ENCODE measurements at regions of chr6 and their contacts with region 1.

Region 1: GRCh38 chr6:36623547-36624459 is 29.6 kb downstream of the SRSF3 start:
- DNase-seq: peak; percentile 88
- ATAC-seq: peak; percentile 72
- H3K4me3 ChIP-seq: no peak overlapping the region
- H3K27ac ChIP-seq: no peak overlapping the region
- H3K4me1 ChIP-seq: peaks cover 23% of the 10 kb centered on the region
- H3K27me3 ChIP-seq: no peaks in the 10 kb centered on the region
- CTCF ChIP-seq: peak; percentile 92

Region 2: GRCh38 chr6:36678518-36679027 is 54.8 kb after region 1 on chr6 and contains the start of gene CDKN1A:
- CTCF ChIA-PET with region 1: interaction called, 3 read pairs
- POLR2A ChIA-PET with region 1: interaction called, 3 read pairs
- intact Hi-C with region 1: loop called (anchors 1 kb)
- DNase-seq: peak; percentile 92
- ATAC-seq: peak; percentile 74
- H3K4me3 ChIP-seq: peak within 1 kb of the TSS; percentile 76
- H3K27ac ChIP-seq: peak within 1 kb of the TSS; percentile 49
- H3K4me1 ChIP-seq: peaks cover 34% of the 10 kb centered on the region
- H3K27me3 ChIP-seq: no peaks in the 10 kb centered on the region
- CTCF ChIP-seq: no peak
- total RNA-seq, gene CDKN1A: 79.5 and 91.5 TPM in 2 replicates

Region 3: GRCh38 chr6:36809941-36810803 is 186.4 kb after region 1 on chr6:
- CTCF ChIA-PET with region 1: no interaction called
- POLR2A ChIA-PET with region 1: no interaction called
- intact Hi-C with region 1: no loop called
- DNase-seq: no peak
- ATAC-seq: no peak
- H3K4me3 ChIP-seq: no peak overlapping the region
- H3K27ac ChIP-seq: no peak overlapping the region
- H3K4me1 ChIP-seq: no peaks in the 10 kb centered on the region
- H3K27me3 ChIP-seq: no peaks in the 10 kb centered on the region
- CTCF ChIP-seq: peak; percentile 31

Measured in PC-3 (cell line).